Activated CD4-positive, alpha-beta T cell treated with anti-CD3 and anti-CD28 coated beads, Interleukin-2, amount 10 ng/mL, durations not matched to agents 7 days and 5 days (primary cell): ENCODE measurements at regions of chr6 and their contacts with region 1.

Region 1: GRCh38 chr6:161370880-161371279 is 97.0 kb upstream of the AGPAT4 start:
- DNase-seq: peak; percentile 72
- H3K4me3 Mint-ChIP-seq: no peak overlapping the region
- H3K27ac Mint-ChIP-seq: no peak overlapping the region
- H3K4me1 Mint-ChIP-seq: no peaks in the 10 kb centered on the region
- H3K27me3 Mint-ChIP-seq: no peaks in the 10 kb centered on the region

Region 2: GRCh38 chr6:160930547-160931377 is 440.1 kb before region 1 on chr6:
- CTCF ChIA-PET with region 1: interaction called, 21 read pairs
- POLR2A ChIA-PET with region 1: no interaction called
- DNase-seq: peak; percentile 44
- H3K4me3 Mint-ChIP-seq: no peak overlapping the region
- H3K27ac Mint-ChIP-seq: no peak overlapping the region
- H3K4me1 Mint-ChIP-seq: peaks cover 5% of the 10 kb centered on the region
- H3K27me3 Mint-ChIP-seq: peaks cover 26% of the 10 kb centered on the region